Left colon (tissue), 2 donors: ENCODE measurements at regions of chr5 and their contacts with region 1.

Region 1: GRCh38 chr5:112208699-112209615 is 210.1 kb downstream of the EPB41L4A start:
- DNase-seq: no peak
- ATAC-seq: no peak

Region 2: GRCh38 chr5:112049738-112050137 is 159.2 kb before region 1 on chr5:
- intact Hi-C with region 1: no loop called
- DNase-seq: no peak
- ATAC-seq: no peak

Region 3: GRCh38 chr5:112419986-112420864 is 211.3 kb after region 1 on chr5:
- intact Hi-C with region 1: loop called in 1 of 2 experiments (anchors 10 kb)
- DNase-seq: peak; percentile 82 to 86
- ATAC-seq: peak; percentile 88